ENCODE measurements at regions of chr21 and their contacts with region 1.

Region 1: GRCh38 chr21:25421327-25422028 is 185.8 kb downstream of the MRPL39 start:
- DNase-seq: peak; percentile 64
- H3K4me3 Mint-ChIP-seq: no peak overlapping the region
- H3K27ac Mint-ChIP-seq: no peak overlapping the region
- H3K4me1 Mint-ChIP-seq: peaks cover 10% of the 10 kb centered on the region
- H3K27me3 Mint-ChIP-seq: peaks cover 11% of the 10 kb centered on the region
- CTCF ChIP-seq: peak; percentile 55

Region 2: DNA sequence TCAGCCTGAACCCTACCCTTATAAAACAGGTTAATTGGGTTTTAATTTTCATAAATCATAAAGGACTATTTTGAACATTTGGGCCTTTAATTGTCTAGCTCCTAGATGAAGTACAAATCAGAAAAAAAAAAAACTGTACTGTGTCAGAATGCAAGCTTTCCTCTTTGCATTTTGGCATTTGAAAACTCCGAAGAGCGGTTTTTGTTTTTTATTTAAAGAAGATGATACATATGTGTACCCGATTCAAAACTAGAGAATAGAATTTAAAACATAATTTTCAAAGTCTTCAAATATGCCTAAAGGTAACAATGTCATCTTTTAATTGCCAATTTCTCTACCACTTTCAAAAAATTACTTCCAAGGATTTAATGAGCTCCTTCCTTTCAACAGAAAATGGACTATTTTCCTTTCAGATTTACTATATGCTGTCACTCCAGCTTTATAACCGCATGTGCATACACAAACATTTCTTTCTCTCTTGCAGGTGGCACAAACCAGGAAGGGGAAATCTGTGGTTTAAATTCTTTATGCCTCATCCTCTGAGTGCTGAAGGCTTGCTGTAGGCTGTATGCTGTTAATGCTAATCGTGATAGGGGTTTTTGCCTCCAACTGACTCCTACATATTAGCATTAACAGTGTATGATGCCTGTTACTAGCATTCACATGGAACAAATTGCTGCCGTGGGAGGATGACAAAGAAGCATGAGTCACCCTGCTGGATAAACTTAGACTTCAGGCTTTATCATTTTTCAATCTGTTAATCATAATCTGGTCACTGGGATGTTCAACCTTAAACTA is 152.1 kb after region 1 on chr21:
- CTCF ChIA-PET with region 1: interaction called, 5 read pairs
- POLR2A ChIA-PET with region 1: no interaction called
- intact Hi-C with region 1: loop called (anchors 2 kb)
- DNase-seq: peak; percentile 70
- H3K4me3 Mint-ChIP-seq: no peak overlapping the region
- H3K27ac Mint-ChIP-seq: no peak overlapping the region
- H3K4me1 Mint-ChIP-seq: peaks cover 5% of the 10 kb centered on the region
- H3K27me3 Mint-ChIP-seq: no peaks in the 10 kb centered on the region
- CTCF ChIP-seq: no peak

Region 3: GRCh38 chr21:25708467-25709065 is 287.1 kb after region 1 on chr21:
- CTCF ChIA-PET with region 1: no interaction called
- POLR2A ChIA-PET with region 1: no interaction called
- intact Hi-C with region 1: loop called (anchors 5 kb)
- DNase-seq: peak; percentile 57
- H3K4me3 Mint-ChIP-seq: no peak overlapping the region
- H3K27ac Mint-ChIP-seq: no peak overlapping the region
- H3K4me1 Mint-ChIP-seq: no peaks in the 10 kb centered on the region
- H3K27me3 Mint-ChIP-seq: no peaks in the 10 kb centered on the region
- CTCF ChIP-seq: peak; percentile 67